Right ventricle myocardium inferior (tissue), 1 donor: ENCODE measurements at regions of chr9 and their contacts with region 1.

Region 1: GRCh38 chr9:87684627-87685219 is 41.2 kb upstream of the CTSL start:
- DNase-seq: no peak
- ATAC-seq: peak; percentile 18

Region 2: DNA sequence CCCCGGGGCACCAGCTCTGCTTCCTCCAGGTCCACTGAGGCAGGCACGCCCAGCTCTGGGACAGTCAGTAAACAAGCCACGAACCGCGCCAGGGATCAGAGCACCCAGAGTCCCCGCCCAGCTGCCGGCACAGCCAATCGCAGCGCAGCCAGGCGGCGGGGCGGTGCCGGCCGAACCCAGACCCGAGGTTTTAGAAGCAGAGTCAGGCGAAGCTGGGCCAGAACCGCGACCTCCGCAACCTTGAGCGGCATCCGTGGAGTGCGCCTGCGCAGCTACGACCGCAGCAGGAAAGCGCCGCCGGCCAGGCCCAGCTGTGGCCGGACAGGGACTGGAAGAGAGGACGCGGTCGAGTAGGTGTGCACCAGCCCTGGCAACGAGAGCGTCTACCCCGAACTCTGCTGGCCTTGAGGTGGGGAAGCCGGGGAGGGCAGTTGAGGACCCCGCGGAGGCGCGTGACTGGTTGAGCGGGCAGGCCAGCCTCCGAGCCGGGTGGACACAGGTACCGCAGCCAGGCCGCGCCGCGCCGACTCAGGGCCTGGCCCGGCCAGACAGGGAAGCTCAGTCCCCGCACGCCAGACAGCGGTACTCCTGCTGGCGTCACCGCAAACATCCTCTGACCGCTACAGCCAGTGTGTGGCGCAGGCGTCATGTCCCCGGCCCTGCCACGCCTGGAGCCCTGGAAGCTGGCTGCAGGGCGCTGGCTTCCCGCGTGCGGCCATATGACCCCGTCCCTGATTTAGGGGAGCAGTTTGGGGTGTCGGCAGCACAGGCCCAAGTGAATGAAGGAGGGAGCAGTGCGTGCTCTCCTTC is 41.4 kb after region 1 on chr9 and contains the start of gene CTSL:
- intact Hi-C with region 1: loop called (anchors 5 kb)
- DNase-seq: peak; percentile 96
- ATAC-seq: peak; percentile 98
- total RNA-seq, gene CTSL: 140 TPM

Region 3: DNA sequence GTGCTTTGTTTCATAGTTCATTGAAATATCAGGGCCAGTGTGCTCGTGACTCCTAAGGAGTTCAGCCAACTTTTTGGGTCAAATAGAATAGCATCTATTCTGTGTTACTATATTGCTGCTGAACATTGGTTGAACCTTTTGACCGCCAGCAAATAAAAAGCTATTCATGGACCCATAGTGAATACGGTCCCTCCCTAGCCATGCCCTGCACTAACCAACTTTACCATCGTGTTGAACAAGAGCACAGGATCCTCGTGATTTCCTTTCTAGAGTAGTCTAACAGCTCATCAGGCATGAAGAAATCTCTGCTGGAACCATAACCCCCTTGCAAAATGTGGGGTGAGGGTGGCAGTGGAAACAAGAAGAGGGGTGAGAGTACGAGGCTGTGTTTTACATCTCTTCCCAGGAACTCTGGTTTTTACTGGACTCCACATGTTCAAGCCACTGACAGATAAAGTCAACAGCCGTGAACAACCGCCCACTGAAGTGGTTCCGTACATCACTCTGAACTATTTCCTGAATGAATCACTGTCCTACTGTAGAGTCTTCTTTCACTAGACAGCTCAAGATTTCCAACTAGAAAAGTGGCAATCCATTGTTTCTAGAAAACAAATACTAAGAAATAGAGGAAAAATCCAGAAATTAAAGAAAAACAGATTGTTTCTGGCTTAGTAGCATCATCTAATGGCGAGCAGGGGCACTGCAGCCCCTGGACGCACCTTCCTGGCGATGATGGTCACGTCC is 127.8 kb after region 1 on chr9:
- intact Hi-C with region 1: loop called (anchors 2 kb)
- DNase-seq: no peak
- ATAC-seq: peak; percentile 52